Caco-2 (cell line): ENCODE measurements at regions of chr14 and their contacts with region 1.

Region 1: GRCh38 chr14:64253672-64254071 is 40.5 kb downstream of the ESR2 start:
- DNase-seq: no peak
- H3K4me3 ChIP-seq: no peak overlapping the region
- H3K4me3 Mint-ChIP-seq: no peak overlapping the region
- H3K27ac Mint-ChIP-seq: no peak overlapping the region
- H3K4me1 ChIP-seq: no peaks in the 10 kb centered on the region
- H3K4me1 Mint-ChIP-seq: no peaks in the 10 kb centered on the region
- H3K27me3 ChIP-seq: no peaks in the 10 kb centered on the region
- H3K27me3 Mint-ChIP-seq: peaks cover 3% of the 10 kb centered on the region
- CTCF ChIP-seq: no peak

Region 2: DNA sequence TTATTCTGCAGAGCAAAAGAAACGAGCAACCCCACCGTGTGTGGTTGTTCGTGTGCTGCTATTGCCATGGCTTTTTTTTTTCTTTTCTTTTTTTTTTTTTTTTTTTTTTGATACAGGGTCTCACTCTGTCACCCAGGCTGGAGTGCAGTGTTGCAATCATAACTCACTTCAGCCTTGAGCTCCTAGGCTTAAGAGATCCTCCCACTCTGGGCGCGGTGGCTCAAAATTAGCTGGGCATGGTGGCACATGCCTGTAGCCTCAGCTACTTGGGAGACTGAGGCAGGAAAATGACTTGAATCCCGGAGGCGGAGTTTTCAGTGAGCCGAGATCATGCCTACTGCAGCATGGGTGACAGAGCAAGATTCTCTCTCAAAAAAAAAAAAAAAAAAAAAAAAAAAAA is 103.8 kb before region 1 on chr14:
- CTCF ChIA-PET with region 1: no interaction called
- POLR2A ChIA-PET with region 1: interaction called, 11 read pairs
- intact Hi-C with region 1: no loop called
- DNase-seq: no peak
- H3K4me3 ChIP-seq: no peak overlapping the region
- H3K4me3 Mint-ChIP-seq: no peak overlapping the region
- H3K27ac Mint-ChIP-seq: no peak overlapping the region
- H3K4me1 ChIP-seq: no peaks in the 10 kb centered on the region
- H3K4me1 Mint-ChIP-seq: no peaks in the 10 kb centered on the region
- H3K27me3 ChIP-seq: no peaks in the 10 kb centered on the region
- H3K27me3 Mint-ChIP-seq: no peaks in the 10 kb centered on the region
- CTCF ChIP-seq: no peak